Activated T-helper 2 cell treated with anti-CD3 and anti-CD28 coated beads, Interferon-gamma antibody, Interleukin-2, Interleukin-4, amounts not matched to agents 10 μg/mL and 5 μg/mL and 100 μg/mL, durations not matched to agents 14 hours and 24 hours and 36 hours (primary cell): ENCODE measurements at regions of chr7 and their contacts with region 1.

Region 1: DNA sequence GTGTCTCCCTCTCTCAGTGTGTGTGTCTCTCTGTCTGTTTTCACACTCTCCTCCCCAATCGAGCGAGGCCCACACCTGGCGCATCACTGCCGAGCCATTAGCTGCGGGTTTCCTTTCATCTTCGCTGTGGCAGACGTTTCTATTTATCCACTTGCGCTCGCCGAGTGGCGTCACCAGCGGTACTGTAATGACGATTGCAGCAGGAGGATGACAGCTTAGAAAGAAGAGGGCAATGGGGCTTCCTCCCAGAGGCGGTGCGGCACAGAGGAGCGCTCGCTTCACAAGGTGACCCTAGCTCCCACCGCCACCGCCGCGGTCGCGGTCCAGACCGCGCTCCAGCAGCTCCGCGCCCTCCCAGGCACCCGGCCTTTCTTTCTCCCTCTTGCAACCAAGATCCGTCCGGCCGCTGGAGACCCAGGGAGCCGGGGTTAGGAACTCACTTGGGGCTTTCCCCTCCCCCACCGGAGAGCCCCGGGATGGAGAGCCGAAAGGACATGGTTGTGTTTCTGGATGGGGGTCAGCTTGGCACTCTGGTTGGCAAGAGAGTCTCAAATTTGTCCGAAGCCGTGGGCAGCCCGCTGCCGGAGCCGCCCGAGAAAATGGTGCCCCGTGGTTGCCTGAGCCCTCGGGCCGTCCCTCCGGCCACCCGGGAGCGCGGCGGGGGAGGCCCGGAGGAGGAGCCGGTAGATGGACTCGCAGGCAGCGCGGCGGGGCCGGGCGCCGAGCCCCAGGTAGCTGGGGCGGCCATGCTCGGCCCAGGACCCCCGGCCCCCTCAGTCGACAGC is at the start of gene EVX1:
- DNase-seq: no peak
- H3K4me3 Mint-ChIP-seq: no peak within 1 kb of the TSS
- H3K27ac Mint-ChIP-seq: peak within 1 kb of the TSS; percentile 35
- H3K4me1 Mint-ChIP-seq: peaks cover 1% of the 10 kb centered on the region
- H3K27me3 Mint-ChIP-seq: peaks cover 75% of the 10 kb centered on the region
- total RNA-seq, gene EVX1: not detected in 2 replicates

Region 2: DNA sequence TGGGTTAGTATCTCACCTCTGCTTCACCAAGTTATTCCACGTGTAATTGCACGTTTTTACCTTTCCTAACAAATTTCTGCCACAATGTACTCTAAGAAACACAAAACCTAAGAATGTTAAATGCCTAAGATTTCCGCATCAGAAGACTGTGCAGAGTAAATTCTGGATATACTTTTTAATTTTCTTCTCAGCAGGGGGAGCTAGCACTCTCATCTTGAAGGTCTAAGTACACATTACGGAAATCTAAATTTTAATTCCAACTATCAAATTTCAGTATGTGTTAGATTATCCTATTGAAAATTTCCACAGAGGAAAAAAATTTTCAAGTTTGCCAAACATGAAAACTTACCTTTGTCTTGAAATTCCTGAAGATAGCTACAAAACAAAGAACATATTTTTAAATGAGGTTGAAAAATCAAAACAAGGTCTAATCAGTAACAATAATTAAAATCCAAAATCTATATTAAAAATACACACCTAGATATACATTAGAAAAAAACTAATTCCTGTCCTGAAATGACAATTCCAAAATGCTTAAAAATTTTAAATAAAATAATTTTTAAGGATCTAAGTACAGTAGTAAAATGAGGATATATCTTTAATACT is 388.9 kb before region 1 on chr7:
- intact Hi-C with region 1: loop called (anchors 10 kb)
- DNase-seq: no peak
- H3K4me3 Mint-ChIP-seq: no peak overlapping the region
- H3K27ac Mint-ChIP-seq: no peak overlapping the region
- H3K4me1 Mint-ChIP-seq: peaks cover 4% of the 10 kb centered on the region
- H3K27me3 Mint-ChIP-seq: peaks cover 37% of the 10 kb centered on the region

Region 3: DNA sequence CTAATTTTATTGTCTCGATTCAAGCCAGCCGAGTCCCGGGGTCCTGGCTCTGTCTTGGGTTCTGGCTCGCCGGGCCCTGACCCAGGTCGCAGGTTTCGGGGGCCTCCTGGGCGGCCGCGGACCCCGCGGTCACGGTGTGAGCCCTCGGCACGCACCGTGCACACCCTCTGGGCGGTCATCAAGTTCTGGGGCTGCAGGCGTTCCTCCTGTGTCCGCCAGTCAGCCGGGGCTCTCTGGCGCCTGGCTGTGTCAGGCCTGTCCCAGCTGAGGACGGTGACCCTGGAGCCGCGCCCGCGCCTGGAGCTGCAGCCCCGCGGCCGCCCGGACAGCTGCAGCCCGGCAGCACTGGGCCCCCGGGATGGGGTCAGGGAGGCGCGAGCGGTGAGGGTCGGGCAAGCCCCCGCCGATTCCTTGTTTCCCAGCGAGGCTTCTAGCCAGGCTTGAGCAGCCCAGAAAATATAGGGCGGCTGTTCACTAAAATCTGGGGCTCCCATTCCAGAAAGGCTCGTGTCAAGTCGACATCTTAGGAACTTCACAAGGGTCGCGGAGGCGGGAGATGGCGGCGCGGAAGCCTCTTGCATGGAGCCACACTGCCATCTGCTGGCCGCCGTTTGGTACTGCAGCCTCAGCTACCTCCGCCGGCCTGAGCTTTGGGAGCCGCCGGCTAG is 82.1 kb before region 1 on chr7:
- intact Hi-C with region 1: loop called (anchors 2 kb)
- DNase-seq: peak; percentile 65
- H3K4me3 Mint-ChIP-seq: peak overlapping the region; percentile 47
- H3K27ac Mint-ChIP-seq: no peak overlapping the region
- H3K4me1 Mint-ChIP-seq: peaks cover 5% of the 10 kb centered on the region
- H3K27me3 Mint-ChIP-seq: peaks cover 81% of the 10 kb centered on the region

Region 4: DNA sequence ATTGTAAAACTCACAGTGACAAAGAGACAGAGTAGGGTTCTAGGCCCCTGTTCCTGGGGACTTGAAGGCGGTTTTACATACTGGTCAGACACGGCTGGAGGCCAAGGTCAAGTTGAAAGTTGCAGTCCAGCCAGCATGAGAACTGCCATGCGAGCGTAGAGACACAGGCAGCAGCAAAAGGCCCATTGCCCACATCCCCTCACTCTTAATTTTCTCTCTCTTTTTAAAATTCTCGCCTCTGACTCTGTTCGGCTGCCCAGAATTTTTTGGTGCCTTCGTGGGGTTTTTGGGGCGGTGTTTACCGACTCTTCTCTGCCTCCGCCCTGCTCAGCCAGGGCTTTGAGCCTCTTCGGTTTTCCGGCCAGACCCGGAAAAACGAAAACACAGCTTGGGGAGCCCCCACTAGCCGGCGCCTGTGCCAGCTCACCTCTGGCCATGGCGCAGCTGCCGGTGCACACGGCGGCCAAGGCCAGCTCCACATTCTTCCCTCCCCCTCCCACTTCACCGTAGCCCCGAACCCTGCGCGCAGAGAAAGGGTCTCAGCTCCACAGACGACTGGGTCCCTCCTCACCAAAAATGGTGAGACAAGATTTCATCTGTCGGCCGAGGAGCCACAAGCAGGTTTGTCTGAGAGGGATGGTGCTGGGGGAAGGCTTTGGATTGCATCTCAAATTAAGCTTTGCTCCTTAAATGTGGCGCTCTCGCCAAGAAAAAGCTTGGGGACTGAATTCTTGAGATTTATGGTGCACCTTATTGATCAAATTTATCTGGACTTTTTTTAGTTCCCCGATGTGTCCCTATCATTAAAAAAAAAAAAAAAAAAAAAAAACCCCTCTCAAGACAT is 40.5 kb before region 1 on chr7:
- intact Hi-C with region 1: loop called (anchors 1 kb)
- DNase-seq: no peak
- H3K4me3 Mint-ChIP-seq: no peak overlapping the region
- H3K27ac Mint-ChIP-seq: no peak overlapping the region
- H3K4me1 Mint-ChIP-seq: peaks cover 4% of the 10 kb centered on the region
- H3K27me3 Mint-ChIP-seq: peaks cover 83% of the 10 kb centered on the region

Region 5: GRCh38 chr7:27254625-27255024 is 11.9 kb after region 1 on chr7:
- intact Hi-C with region 1: no loop called
- DNase-seq: no peak
- H3K4me3 Mint-ChIP-seq: no peak overlapping the region
- H3K27ac Mint-ChIP-seq: no peak overlapping the region
- H3K4me1 Mint-ChIP-seq: no peaks in the 10 kb centered on the region
- H3K27me3 Mint-ChIP-seq: peaks cover 47% of the 10 kb centered on the region

Region 6: GRCh38 chr7:27399791-27400567 is 157.2 kb after region 1 on chr7:
- intact Hi-C with region 1: no loop called
- DNase-seq: no peak
- H3K4me3 Mint-ChIP-seq: no peak overlapping the region
- H3K27ac Mint-ChIP-seq: no peak overlapping the region
- H3K4me1 Mint-ChIP-seq: no peaks in the 10 kb centered on the region
- H3K27me3 Mint-ChIP-seq: no peaks in the 10 kb centered on the region

Region 7: GRCh38 chr7:27462575-27463270 is 220.0 kb after region 1 on chr7:
- intact Hi-C with region 1: no loop called
- DNase-seq: no peak
- H3K4me3 Mint-ChIP-seq: no peak overlapping the region
- H3K27ac Mint-ChIP-seq: no peak overlapping the region
- H3K4me1 Mint-ChIP-seq: no peaks in the 10 kb centered on the region
- H3K27me3 Mint-ChIP-seq: no peaks in the 10 kb centered on the region